Naive thymus-derived CD4-positive, alpha-beta T cell (primary cell): ENCODE measurements at regions of chr2 and their contacts with region 1.

Region 1: DNA sequence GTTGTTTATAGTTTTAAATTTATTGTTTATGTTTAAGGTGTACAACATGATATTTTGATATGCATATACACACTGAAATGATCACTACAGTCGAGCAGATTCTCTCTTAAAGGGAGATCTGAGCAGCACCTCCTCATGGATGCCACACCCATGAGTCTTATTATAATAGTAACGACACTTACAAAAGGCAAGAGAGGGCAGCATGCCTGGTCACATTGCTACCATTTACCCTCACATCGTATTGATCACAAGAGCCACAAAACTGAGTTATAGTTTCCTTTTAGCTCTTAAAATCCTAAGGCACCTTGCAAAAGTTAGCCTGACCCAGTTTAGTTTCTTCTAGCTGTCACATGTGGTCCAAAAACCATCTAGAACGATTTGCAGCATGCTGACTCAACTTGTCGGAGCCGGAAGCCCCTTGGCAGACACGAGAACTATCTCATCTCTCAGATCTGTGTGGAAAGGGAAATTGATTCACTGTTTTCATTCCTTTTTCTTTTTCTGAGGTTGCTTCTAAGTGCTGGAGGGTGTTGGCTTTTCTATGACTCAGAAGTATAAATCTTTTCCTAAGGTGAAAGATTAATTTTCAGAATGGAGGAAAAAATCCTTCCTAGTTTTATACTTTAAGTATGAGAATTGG is 85.3 kb downstream of the CDC42EP3 start:
- DNase-seq: peak; percentile 14 to 71 (median 61)
- ATAC-seq: peak; percentile 92
- H3K4me3 ChIP-seq: no peak overlapping the region
- H3K4me3 Mint-ChIP-seq: peak overlapping the region; percentile 1 to 76 (median 58)
- H3K27ac ChIP-seq: peak overlapping the region; percentile 6
- H3K27ac Mint-ChIP-seq: peak overlapping the region; percentile 11 to 86 (median 62)
- H3K4me1 ChIP-seq: peaks cover 39 to 75% of the 10 kb centered on the region in 2 donors
- H3K4me1 Mint-ChIP-seq: peaks cover 49 to 81% (median 56%) of the 10 kb centered on the region in 7 donors
- H3K27me3 ChIP-seq: no peaks in the 10 kb centered on the region
- H3K27me3 Mint-ChIP-seq: no peaks in the 10 kb centered on the region

Region 2: GRCh38 chr2:37005118-37005868 is 580.8 kb before region 1 on chr2:
- CTCF ChIA-PET with region 1: no interaction called
- POLR2A ChIA-PET with region 1: no interaction called
- intact Hi-C with region 1: no loop called
- DNase-seq: peak in 7 of 9 donors; percentile 15 to 46 (median 18)
- ATAC-seq: peak; percentile 80
- H3K4me3 ChIP-seq: no peak overlapping the region
- H3K4me3 Mint-ChIP-seq: peak overlapping the region in 8 of 10 donors; percentile 15 to 76 (median 56)
- H3K27ac ChIP-seq: peak overlapping the region; percentile 22
- H3K27ac Mint-ChIP-seq: peak overlapping the region; percentile 28 to 84 (median 71)
- H3K4me1 ChIP-seq: no peaks in the 10 kb centered on the region
- H3K4me1 Mint-ChIP-seq: peaks cover 5 to 17% (median 9%) of the 10 kb centered on the region in 7 donors
- H3K27me3 ChIP-seq: no peaks in the 10 kb centered on the region
- H3K27me3 Mint-ChIP-seq: no peaks in the 10 kb centered on the region

Region 3: DNA sequence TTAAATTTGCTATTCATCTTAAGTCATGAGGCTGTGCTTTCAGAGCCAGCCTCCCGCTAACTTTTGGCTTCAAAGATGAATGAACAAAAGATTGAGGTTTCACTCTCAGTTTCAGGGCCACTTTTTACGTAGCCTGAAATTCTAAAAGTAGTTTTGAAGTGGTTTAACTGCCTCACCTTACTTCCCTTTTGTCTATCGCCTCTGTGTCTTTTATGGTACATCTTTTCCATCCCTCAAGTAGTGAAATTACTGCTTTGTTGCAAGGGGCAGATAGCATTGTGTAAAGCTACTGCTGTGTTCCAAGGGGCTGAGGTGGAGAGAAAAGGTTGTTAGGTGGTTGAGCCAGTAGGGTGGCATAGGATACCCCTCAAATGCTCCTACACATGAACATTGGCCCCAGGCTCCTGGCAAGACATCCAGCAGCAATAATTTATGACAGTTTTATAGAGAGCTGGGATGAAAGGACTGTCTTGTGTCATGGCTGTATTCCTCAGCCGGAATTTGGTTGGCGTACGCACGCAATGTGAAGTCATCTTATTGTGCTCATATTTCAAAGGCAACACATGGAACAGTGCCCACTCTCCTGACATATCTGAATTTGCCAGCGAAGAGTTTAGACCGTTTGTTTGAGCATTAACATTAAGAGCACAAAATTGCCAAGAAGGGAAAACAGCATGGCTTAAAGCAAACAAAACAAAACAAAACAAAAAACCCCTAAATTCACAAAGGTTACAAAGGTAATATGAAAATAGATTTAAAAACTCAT is 209.5 kb before region 1 on chr2:
- CTCF ChIA-PET with region 1: no interaction called
- POLR2A ChIA-PET with region 1: no interaction called
- intact Hi-C with region 1: loop called in 1 of 2 experiments (anchors 1 kb)
- DNase-seq: peak in 8 of 9 donors; percentile 27 to 69 (median 56)
- ATAC-seq: peak; percentile 86
- H3K4me3 ChIP-seq: no peak overlapping the region
- H3K4me3 Mint-ChIP-seq: peak overlapping the region in 9 of 10 donors; percentile 33 to 80 (median 63)
- H3K27ac ChIP-seq: no peak overlapping the region
- H3K27ac Mint-ChIP-seq: peak overlapping the region in 4 of 9 donors; percentile 16 to 65 (median 35)
- H3K4me1 ChIP-seq: peaks cover 13 to 17% of the 10 kb centered on the region in 2 donors
- H3K4me1 Mint-ChIP-seq: peaks cover 11 to 30% (median 17%) of the 10 kb centered on the region in 7 donors
- H3K27me3 ChIP-seq: peaks cover 0 to 6% of the 10 kb centered on the region in 2 donors
- H3K27me3 Mint-ChIP-seq: peaks cover 25 to 66% (median 53%) of the 10 kb centered on the region in 5 donors

Region 4: DNA sequence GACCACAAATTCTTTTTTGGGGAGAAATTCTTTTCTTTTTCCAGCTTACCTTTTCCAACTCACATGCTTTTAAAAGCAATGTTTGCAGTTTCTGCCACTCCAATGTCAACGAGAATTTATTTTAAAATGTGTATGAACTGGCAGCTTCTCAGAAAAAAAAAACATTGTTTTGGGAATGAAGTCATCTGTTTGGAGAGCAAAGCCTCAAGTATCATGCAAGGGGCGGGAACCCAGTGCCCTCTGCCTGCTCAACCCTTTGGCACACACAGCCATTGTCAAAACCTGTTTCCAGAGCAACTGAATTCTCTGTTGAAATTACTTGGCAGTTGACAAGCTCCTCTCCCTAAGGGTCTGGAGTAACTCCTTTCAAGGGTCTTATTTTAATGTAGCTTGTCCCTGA is 113.1 kb before region 1 on chr2:
- CTCF ChIA-PET with region 1: no interaction called
- POLR2A ChIA-PET with region 1: no interaction called
- intact Hi-C with region 1: no loop called
- DNase-seq: no peak
- ATAC-seq: no peak
- H3K4me3 ChIP-seq: no peak overlapping the region
- H3K4me3 Mint-ChIP-seq: no peak overlapping the region
- H3K27ac ChIP-seq: no peak overlapping the region
- H3K27ac Mint-ChIP-seq: no peak overlapping the region
- H3K4me1 ChIP-seq: no peaks in the 10 kb centered on the region
- H3K4me1 Mint-ChIP-seq: peaks cover 0 to 4% (median 0%) of the 10 kb centered on the region in 7 donors
- H3K27me3 ChIP-seq: no peaks in the 10 kb centered on the region
- H3K27me3 Mint-ChIP-seq: peaks cover 0 to 6% (median 0%) of the 10 kb centered on the region in 5 donors

Region 5: GRCh38 chr2:37549598-37549997 is 36.5 kb before region 1 on chr2:
- CTCF ChIA-PET with region 1: no interaction called
- POLR2A ChIA-PET with region 1: no interaction called
- intact Hi-C with region 1: loop called in 1 of 2 experiments (anchors 5 kb)
- DNase-seq: no peak
- ATAC-seq: no peak
- H3K4me3 ChIP-seq: no peak overlapping the region
- H3K4me3 Mint-ChIP-seq: no peak overlapping the region
- H3K27ac ChIP-seq: no peak overlapping the region
- H3K27ac Mint-ChIP-seq: no peak overlapping the region
- H3K4me1 ChIP-seq: no peaks in the 10 kb centered on the region
- H3K4me1 Mint-ChIP-seq: peaks cover 0 to 9% (median 5%) of the 10 kb centered on the region in 7 donors
- H3K27me3 ChIP-seq: no peaks in the 10 kb centered on the region
- H3K27me3 Mint-ChIP-seq: peaks cover 0 to 8% (median 0%) of the 10 kb centered on the region in 5 donors

Region 6: DNA sequence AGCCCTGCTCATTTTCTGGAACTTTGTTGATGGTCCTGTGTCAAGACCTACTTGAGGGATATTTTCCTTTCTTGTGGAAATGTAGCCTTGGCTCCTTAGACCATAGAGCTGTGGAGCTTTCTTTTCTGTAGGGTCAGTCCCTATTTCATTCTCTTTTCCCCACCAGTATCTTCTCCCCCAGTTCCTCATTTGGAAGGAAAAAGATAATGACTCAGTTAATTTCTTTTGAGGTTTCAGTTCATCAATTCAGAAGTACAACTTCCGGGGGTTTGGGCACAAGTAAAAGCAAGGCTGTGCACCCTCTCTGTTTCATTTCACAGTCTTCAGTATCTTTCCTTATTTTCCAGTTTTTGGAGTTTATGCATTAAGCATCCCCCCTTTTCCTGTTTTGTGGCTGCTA is 14.6 kb after region 1 on chr2:
- CTCF ChIA-PET with region 1: interaction called, 4 read pairs
- POLR2A ChIA-PET with region 1: interaction called, 6 read pairs
- intact Hi-C with region 1: loop called in 1 of 2 experiments (anchors 1 kb)
- DNase-seq: no peak
- ATAC-seq: peak; percentile 28
- H3K4me3 ChIP-seq: peak overlapping the region; percentile 58
- H3K4me3 Mint-ChIP-seq: peak overlapping the region in 9 of 10 donors; percentile 35 to 84 (median 80)
- H3K27ac ChIP-seq: no peak overlapping the region
- H3K27ac Mint-ChIP-seq: peak overlapping the region in 6 of 9 donors; percentile 38 to 95 (median 90)
- H3K4me1 ChIP-seq: peaks cover 30 to 35% of the 10 kb centered on the region in 2 donors
- H3K4me1 Mint-ChIP-seq: peaks cover 35 to 53% (median 46%) of the 10 kb centered on the region in 7 donors
- H3K27me3 ChIP-seq: no peaks in the 10 kb centered on the region
- H3K27me3 Mint-ChIP-seq: peaks cover 0 to 13% (median 0%) of the 10 kb centered on the region in 5 donors

Region 7: DNA sequence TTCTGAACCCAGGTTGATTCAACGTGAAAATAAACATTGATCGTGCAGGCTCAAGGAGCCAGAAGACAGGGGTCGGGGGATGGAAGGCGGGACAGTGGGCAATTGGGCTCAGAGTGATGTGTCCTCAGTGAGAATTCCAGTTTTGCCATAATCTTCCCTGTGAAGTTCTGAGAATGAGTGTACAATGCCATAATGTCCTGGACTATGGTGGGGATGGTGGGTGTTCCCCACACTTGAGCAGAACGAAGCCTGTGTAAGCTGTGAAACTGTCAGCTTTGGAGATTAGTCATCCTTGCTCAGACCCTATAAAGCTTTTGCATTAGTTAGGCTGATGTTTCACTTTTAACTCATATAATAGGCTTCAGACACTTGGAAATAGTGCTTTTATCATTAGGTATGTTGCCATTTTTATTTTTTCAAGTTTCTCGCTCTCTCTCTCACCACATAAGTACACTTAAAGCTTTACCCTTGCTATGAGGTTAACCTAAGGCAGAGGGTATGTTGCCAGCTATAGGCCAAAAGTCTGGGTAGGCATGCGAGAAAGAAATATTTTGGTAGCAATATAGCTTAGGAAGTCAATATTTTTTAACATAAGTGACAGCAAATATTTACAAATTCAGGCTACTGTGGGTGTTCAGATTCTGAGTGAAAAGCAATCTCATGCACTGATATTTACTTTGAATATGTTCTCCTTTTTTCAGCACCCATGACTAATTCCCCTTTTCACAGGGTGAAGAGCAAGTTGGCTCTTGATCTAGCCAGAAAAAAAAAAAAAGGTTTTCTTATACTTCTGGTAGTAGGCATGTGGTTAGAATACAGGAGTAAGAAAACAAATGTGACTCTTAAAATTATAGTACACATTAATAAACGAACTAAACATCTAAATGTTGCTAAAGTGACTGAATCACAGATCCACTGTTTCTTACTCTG is 38.1 kb after region 1 on chr2:
- CTCF ChIA-PET with region 1: no interaction called
- POLR2A ChIA-PET with region 1: interaction called, 3 read pairs
- intact Hi-C with region 1: loop called (anchors 2 to 5 kb)
- DNase-seq: no peak
- ATAC-seq: peak; percentile 70
- H3K4me3 ChIP-seq: no peak overlapping the region
- H3K4me3 Mint-ChIP-seq: peak overlapping the region in 9 of 10 donors; percentile 7 to 66 (median 51)
- H3K27ac ChIP-seq: no peak overlapping the region
- H3K27ac Mint-ChIP-seq: peak overlapping the region; percentile 38 to 92 (median 83)
- H3K4me1 ChIP-seq: peaks cover 30 to 56% of the 10 kb centered on the region in 2 donors
- H3K4me1 Mint-ChIP-seq: peaks cover 40 to 63% (median 45%) of the 10 kb centered on the region in 7 donors
- H3K27me3 ChIP-seq: no peaks in the 10 kb centered on the region
- H3K27me3 Mint-ChIP-seq: peaks cover 0 to 3% (median 0%) of the 10 kb centered on the region in 5 donors

Region 8: GRCh38 chr2:37711308-37711731 is 125.2 kb after region 1 on chr2:
- CTCF ChIA-PET with region 1: no interaction called
- POLR2A ChIA-PET with region 1: no interaction called
- intact Hi-C with region 1: loop called in 1 of 2 experiments (anchors 5 kb)
- DNase-seq: peak in 4 of 9 donors; percentile 3 to 15 (median 10)
- ATAC-seq: peak; percentile 76
- H3K4me3 ChIP-seq: no peak overlapping the region
- H3K4me3 Mint-ChIP-seq: peak overlapping the region in 6 of 10 donors; percentile 27 to 58 (median 48)
- H3K27ac ChIP-seq: no peak overlapping the region
- H3K27ac Mint-ChIP-seq: peak overlapping the region in 7 of 9 donors; percentile 6 to 69 (median 31)
- H3K4me1 ChIP-seq: peaks cover 14 to 28% of the 10 kb centered on the region in 2 donors
- H3K4me1 Mint-ChIP-seq: peaks cover 15 to 47% (median 22%) of the 10 kb centered on the region in 7 donors
- H3K27me3 ChIP-seq: no peaks in the 10 kb centered on the region
- H3K27me3 Mint-ChIP-seq: peaks cover 0 to 6% (median 0%) of the 10 kb centered on the region in 5 donors

Region 9: DNA sequence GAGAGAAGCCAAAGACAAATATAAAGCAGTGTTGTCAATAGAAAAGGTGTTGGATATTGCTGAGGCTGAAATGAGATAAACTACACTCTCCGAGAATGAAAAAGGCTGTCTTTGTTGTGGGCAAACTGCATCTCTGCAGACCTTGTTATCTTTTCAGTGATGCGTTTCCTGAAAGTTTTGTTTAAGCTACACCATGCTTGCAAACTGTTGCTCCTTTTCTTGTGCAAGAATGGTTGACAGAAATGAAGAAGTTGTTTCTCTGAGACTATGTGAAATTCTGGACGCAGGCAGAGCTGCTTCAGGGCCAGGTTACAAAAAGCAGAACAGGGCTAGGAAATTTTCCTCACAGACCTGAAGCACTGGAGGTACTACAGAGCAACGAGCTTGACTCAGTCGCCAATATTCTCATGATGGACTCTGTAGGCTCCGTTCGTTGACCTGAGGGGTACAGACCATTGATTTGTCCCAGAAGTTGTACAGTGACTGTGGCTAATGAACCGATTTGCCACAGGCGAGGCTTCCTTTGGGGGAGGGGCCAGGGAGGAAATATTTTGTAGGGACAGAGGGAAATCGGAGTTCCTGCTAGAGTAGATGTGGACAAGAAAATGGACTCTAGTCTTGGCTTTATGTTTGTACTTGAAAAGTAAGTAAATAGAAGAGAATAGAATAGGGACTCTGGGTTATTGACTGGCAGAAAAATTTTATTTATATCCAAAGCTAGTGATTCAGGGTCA is 794.5 kb after region 1 on chr2:
- CTCF ChIA-PET with region 1: no interaction called
- POLR2A ChIA-PET with region 1: no interaction called
- intact Hi-C with region 1: no loop called
- DNase-seq: peak in 7 of 9 donors; percentile 64 to 78 (median 71)
- ATAC-seq: peak; percentile 30
- H3K4me3 ChIP-seq: peak overlapping the region; percentile 6
- H3K4me3 Mint-ChIP-seq: peak overlapping the region; percentile 44 to 83 (median 68)
- H3K27ac ChIP-seq: peak overlapping the region; percentile 40
- H3K27ac Mint-ChIP-seq: peak overlapping the region; percentile 77 to 94 (median 84)
- H3K4me1 ChIP-seq: peaks cover 16 to 21% of the 10 kb centered on the region in 2 donors
- H3K4me1 Mint-ChIP-seq: peaks cover 30 to 50% (median 40%) of the 10 kb centered on the region in 7 donors
- H3K27me3 ChIP-seq: no peaks in the 10 kb centered on the region
- H3K27me3 Mint-ChIP-seq: peaks cover 0 to 3% (median 0%) of the 10 kb centered on the region in 5 donors